ENCODE measurements at regions of chr12 and their contacts with region 1.

Region 1: DNA sequence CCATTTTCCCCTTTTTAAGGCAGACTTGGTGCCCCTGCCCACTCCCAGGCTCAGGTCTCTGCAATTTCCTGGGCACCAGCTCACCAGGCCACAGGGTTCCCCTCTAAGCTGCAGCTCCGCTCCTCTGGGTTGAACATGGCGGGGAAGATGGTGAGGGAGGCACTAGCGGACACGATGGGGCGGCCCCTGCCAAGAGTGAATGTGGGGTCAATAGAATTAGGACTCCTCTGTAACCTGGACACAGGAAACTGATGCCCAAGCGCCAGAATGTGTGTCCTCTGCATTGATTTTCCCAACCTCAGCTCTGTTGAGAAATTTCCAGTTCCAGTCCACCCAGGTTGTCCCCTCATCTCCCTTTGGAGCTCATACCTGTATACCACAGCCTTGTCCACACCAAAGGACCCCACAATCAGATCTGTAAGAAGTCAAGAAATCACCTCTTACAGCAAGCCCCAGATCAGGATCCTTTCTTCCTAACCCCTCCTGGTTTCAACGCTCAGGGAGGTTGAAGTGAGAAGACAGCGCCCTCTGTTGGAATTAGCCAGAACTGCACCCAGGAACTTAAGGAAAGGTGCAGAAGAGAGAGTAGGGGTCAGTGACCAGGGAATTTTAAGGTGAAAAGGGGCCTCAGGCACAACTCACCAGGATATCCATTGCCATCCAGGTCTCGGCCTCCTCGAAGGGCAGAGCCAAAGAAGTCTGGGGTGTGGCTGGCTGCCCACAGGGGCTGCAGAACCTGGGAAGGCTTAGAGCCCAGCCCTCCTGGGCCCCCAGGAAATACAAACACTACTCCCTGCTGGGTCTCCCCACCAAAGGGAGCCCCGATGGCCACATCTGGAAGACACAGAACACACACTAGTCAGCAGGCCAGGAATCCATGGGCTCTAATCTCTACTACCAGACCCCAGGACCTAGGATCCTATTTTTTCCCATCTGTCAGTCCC is 14.7 kb downstream of the ITGA5 start:
- DNase-seq: no peak
- ATAC-seq: no peak

Region 2: DNA sequence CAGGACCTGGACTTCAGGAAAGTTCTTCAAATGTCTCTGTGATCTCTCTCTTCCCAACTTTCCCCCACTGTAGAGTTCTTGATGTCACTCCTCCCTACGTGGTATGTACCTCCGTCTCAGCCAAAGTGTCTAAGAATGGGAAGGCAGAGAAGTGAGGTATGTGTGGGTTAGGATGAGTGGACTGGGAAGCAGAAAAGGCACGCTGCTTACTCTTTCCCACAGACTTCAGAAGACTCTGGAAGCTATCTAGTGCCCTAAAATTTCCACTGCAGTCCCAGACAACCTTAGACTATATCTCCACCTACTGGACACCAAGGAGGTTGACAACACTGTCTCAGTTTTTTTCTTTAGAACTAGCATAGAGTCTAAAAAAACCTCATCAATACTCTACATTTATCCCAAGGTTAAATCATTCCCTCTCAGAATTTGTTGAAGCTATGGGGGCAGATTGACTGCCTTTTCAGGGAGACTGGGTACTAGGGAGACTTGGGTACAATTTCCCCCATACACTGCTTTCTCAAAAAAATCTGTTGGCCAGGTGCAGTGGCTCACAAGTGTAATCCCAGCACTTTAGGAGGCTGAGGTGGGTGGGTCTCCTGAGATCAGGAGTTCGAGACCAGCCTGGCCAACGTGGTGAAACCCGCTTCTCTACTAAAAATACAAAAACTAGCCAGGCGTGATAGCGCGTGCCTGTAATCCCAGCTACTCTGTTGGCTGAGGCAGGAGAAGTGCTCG is 35.4 kb after region 1 on chr12:
- intact Hi-C with region 1: loop called (anchors 5 kb)
- DNase-seq: no peak
- ATAC-seq: peak; percentile 90

Measured in sciatic nerve (tissue), 2 donors.